HCT116 (cell line): ENCODE measurements at regions of chrX and their contacts with region 1.

Region 1: DNA sequence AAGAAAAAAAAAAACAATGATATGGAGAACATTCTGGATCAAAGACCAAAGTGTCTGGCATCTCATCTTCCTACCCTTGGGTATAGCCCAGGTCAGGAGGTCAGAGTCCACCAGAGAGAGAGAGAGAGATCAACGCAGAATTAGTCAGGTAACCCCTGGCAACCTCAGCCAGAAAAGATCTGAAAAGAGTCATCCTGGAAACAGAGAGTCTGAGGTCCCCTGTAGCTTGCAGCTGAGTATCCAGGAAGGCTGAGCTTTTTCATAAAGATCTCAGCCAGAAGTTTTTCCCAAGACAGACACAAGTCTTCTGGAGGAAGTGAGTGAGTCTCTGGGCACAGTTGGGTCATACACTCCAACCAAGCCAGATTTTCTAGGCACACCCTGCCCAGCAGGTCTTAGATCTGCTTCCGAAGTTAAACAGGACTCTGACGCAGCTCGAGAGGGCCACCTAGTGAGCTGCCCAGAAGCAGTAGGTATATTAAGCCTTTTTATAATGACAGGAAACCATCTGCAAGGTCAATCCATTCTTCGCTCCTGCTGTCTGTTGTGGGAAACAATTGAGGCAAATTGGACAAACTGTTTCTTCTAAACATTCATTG is 35.7 kb downstream of the ACE2 start:
- DNase-seq: peak; percentile 53
- ATAC-seq: peak; percentile 96
- H3K4me3 ChIP-seq: no peak overlapping the region
- H3K27ac ChIP-seq: no peak overlapping the region
- H3K4me1 ChIP-seq: peaks cover 0 to 3% of the 10 kb centered on the region in 2 experiments; a peak in 1 of 4 replicates
- H3K27me3 ChIP-seq: no peaks in the 10 kb centered on the region
- CTCF ChIP-seq: peak; percentile 56 to 71 (median 64)
- POLR2A ChIP-seq: no peak
- RAD21 ChIP-seq: peak; percentile 80

Region 2: DNA sequence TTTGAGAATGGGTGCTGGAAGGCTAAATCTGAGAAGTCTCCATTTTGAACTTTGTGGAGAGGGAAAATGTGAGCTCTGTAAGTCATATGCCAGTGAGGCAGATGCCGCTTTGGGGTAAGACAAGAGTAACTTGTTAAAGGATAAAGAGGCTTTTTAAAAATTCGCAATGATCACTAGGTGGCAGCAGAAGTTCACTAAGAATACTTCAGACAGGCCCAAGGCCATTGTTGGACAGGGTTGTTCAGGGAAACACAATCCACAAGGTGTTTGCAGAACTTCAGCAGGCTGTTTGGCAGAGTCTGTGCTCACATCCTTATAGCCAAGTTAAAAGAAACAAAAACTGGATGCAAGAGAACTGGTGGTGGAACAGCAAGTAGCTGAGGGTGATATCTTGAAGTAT is 216.0 kb before region 1 on chrX:
- CTCF ChIA-PET with region 1: no interaction called
- POLR2A ChIA-PET with region 1: no interaction called
- RAD21 ChIA-PET with region 1: no interaction called
- intact Hi-C with region 1: loop called (anchors 5 kb)
- DNase-seq: peak; percentile 39
- ATAC-seq: peak; percentile 81
- H3K4me3 ChIP-seq: no peak overlapping the region
- H3K27ac ChIP-seq: no peak overlapping the region
- H3K4me1 ChIP-seq: no peaks in the 10 kb centered on the region
- H3K27me3 ChIP-seq: no peaks in the 10 kb centered on the region
- CTCF ChIP-seq: peak; percentile 18 to 41 (median 34); a peak in 4 of 6 replicates
- POLR2A ChIP-seq: no peak
- RAD21 ChIP-seq: peak; percentile 71

Region 3: DNA sequence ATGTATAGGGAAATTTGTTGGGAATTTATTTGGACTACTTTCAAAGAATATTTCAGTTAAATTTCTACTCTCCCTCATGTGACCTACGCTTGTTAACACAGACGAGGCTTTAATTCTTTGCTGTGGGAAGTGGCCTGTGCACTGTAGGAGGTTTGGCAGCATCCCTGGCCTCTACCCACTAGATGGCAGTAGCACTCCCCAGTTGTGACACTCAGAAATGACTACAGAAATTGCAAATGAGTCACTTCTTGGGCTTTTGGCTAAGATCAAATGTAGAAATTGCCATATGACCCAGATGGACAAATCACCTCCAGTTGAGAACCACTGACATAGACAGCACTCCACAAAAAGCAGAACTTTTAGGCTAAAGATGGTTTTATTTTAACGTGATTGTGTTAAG is 94.1 kb before region 1 on chrX:
- CTCF ChIA-PET with region 1: interaction called, 6 read pairs
- POLR2A ChIA-PET with region 1: no interaction called
- RAD21 ChIA-PET with region 1: no interaction called
- intact Hi-C with region 1: loop called (anchors 1 kb)
- DNase-seq: peak; percentile 27
- ATAC-seq: peak; percentile 86
- H3K4me3 ChIP-seq: no peak overlapping the region
- H3K27ac ChIP-seq: no peak overlapping the region
- H3K4me1 ChIP-seq: peaks cover 0 to 12% of the 10 kb centered on the region in 2 experiments; a peak in 1 of 4 replicates
- H3K27me3 ChIP-seq: no peaks in the 10 kb centered on the region
- CTCF ChIP-seq: peak; percentile 46 to 71 (median 71); a peak in 5 of 6 replicates
- POLR2A ChIP-seq: no peak
- RAD21 ChIP-seq: peak; percentile 72

Region 4: DNA sequence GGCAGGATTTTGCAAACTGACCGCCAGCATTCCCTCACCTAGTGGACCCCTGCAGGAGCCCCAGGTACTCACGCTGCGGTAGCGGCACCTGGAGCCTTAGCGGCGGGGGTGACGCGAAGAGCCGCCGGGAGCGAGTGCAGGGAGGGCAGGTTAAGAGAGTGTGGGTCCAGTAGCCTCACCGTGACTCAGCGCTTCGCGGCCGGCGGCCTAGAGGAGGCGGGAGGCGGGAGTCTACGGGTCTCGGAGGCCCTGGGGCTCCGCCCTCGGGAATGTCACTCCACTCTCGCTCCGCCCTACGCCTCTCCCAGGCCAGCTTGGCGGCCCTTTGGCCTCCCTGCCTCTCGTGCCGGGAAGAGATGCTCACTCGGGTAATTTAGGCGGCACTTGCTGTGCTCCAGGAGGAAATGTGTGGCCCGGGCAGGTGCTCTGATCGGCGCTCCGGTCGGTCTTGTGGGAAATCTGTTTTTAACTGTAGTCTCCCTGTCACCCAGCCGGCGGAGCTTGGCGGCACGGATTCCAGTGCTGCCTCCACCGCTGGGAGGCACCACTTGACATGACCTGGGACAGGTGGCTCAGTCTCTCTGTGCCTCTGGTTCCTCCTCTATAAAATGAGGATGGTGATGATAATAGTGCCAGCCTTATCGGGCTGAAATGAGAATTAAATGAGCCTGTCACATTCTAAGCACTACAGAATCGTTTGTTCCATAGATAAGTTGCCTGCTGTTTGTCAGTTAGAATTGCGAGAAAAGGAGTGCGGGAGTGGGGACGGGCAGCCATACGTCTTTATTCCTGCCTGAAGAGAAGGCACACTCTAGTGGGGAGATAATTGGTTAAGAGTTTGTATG is 71.7 kb before region 1 on chrX and contains the start of gene PIR:
- CTCF ChIA-PET with region 1: interaction called, 9 read pairs
- POLR2A ChIA-PET with region 1: no interaction called
- RAD21 ChIA-PET with region 1: no interaction called
- intact Hi-C with region 1: loop called (anchors 1 kb)
- DNase-seq: peak; percentile 68
- ATAC-seq: peak; percentile 97
- H3K4me3 ChIP-seq: peak within 1 kb of the TSS; percentile 56 to 71
- H3K27ac ChIP-seq: peak within 1 kb of the TSS; percentile 74
- H3K4me1 ChIP-seq: peaks cover 3 to 15% of the 10 kb centered on the region in 2 experiments; a peak in 1 of 4 replicates
- H3K27me3 ChIP-seq: no peaks in the 10 kb centered on the region
- CTCF ChIP-seq: peak; percentile 36 to 55 (median 53); a peak in 5 of 6 replicates
- POLR2A ChIP-seq: no peak
- RAD21 ChIP-seq: no peak
- total RNA-seq, gene PIR: 27.5 TPM

Region 5: DNA sequence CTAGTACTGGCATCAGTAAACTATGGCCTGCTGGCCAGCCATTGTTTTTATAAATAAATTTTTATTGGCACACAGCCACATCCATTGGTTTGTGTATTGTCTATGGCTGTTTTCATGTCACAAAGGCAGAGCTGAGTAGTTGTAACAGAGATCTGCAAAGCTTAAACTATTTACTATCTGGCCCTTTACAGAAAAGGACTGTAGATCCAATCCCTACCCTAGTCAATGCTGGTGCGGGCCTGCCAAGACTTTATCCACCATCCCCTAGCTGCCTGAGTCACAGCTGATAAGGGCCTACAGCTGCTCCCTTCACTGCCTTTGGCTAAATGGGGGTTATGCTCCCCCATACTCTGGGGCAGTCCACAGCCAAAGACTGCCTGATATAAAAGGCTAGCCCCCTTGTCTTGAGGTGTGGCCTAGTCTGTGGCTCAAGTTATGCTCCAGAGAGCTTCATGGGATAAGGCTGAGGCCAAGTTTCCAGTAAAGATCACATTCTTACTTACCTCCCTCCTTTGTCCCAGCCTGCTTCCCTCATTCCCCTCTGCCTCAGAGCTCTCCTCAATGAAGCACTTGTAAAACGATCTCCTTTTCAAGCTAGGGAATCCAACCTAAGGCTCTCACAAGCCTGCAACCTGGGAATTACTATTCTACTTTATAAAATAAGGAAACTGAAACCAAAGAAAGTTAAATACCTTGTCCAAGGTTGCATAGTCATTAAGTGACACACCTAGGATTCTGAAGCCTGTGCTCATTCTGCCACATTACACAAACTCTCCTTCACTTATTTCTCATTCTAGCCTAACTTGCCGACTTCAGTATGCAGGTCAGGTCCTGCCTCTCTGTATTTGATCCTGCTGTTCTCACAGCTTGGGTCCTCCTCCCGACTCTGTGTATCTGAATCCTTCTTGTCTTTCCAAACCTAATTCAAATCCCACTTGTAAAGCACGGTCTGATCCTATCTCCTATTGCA is 15.0 kb after region 1 on chrX:
- CTCF ChIA-PET with region 1: interaction called, 3 read pairs
- POLR2A ChIA-PET with region 1: no interaction called
- RAD21 ChIA-PET with region 1: no interaction called
- intact Hi-C with region 1: loop called (anchors 1 kb)
- DNase-seq: no peak
- ATAC-seq: no peak
- H3K4me3 ChIP-seq: no peak overlapping the region
- H3K27ac ChIP-seq: no peak overlapping the region
- H3K4me1 ChIP-seq: no peaks in the 10 kb centered on the region
- H3K27me3 ChIP-seq: no peaks in the 10 kb centered on the region
- CTCF ChIP-seq: no peak
- POLR2A ChIP-seq: no peak
- RAD21 ChIP-seq: no peak

Region 6: DNA sequence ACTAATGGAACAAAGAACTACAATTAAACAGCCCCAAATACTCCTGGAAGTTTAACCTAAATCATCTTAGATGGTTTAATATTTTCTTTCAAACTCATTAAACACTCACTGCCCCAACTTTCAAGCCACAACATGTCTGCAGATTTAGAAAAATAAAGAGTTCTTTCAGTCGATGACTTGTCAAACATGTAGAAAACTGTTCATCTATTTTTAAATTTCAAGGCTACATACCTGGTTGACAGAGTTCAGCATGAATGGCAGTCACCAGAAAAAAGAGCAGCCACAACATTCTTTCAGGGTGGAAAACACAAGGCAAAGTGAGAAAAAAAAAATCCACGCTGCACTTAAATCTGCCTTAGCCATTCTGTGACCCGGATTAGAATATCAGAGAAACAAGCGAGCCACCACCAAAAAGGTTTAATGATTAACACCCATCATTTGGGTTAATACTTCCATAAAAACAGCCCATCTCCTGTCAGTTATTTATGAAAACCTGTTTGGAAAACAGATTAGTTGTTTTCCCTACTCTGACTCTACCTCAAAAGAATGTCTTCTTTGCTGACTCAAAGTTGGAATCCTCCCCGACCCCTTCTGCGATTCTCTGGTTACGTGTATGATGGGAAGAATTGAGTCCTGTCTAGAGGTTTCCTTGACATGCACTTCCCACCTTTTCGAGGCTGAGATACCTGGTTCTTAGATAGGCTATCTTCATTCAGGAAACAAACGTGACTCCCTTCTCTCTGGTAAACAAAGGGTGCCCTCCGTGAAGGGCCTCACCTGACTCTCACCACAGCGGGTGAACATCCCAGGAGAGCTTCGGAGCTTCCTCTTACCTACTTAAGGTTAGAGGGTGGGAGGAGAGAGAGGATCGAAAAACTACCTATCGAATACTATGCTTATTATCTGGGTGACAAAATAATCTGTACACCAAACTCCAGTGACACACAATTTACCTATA is 99.7 kb after region 1 on chrX and contains the start of gene CLTRN:
- CTCF ChIA-PET with region 1: no interaction called
- POLR2A ChIA-PET with region 1: no interaction called
- RAD21 ChIA-PET with region 1: no interaction called
- intact Hi-C with region 1: no loop called
- DNase-seq: no peak
- ATAC-seq: no peak
- H3K4me3 ChIP-seq: no peak within 1 kb of the TSS
- H3K27ac ChIP-seq: no peak within 1 kb of the TSS
- H3K4me1 ChIP-seq: 0 out of 4 replicates have a peak, but pooled peaks cover 0 to 6% of the 10 kb centered on the region in 2 experiments
- H3K27me3 ChIP-seq: no peaks in the 10 kb centered on the region
- CTCF ChIP-seq: no peak
- POLR2A ChIP-seq: no peak
- RAD21 ChIP-seq: no peak
- total RNA-seq, gene CLTRN: 0.25 TPM

Region 7: GRCh38 chrX:16087081-16087480 is 522.0 kb after region 1 on chrX:
- CTCF ChIA-PET with region 1: no interaction called
- POLR2A ChIA-PET with region 1: no interaction called
- RAD21 ChIA-PET with region 1: no interaction called
- intact Hi-C with region 1: no loop called
- DNase-seq: no peak
- ATAC-seq: no peak
- H3K4me3 ChIP-seq: no peak overlapping the region
- H3K27ac ChIP-seq: no peak overlapping the region
- H3K4me1 ChIP-seq: no peaks in the 10 kb centered on the region
- H3K27me3 ChIP-seq: no peaks in the 10 kb centered on the region
- CTCF ChIP-seq: no peak
- POLR2A ChIP-seq: no peak
- RAD21 ChIP-seq: no peak